Calu3 (cell line): ENCODE measurements at regions of chrX and their contacts with region 1.

Region 1: DNA sequence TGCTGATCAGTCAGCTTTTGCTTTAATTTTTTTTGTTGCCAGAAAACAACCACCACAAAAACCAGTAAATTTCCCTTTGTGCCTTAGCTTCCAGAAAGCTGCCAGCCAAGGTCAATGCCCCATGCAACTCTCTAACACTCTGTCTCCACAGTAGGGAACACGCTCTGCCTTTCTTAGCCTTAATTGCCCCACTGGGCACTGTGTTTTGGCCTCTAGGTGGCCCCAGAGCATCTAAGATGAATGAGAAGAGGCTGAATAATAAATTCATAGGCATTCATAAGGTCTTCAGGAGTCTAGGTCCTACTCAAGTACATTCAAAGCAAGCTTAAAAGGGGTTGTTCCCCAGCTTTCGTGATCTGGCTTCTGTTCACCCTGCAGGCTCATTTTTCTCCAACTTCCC is 57.7 kb upstream of the PASD1 start:
- DNase-seq: peak; percentile 14
- H3K4me3 Mint-ChIP-seq: no peak overlapping the region
- H3K27ac Mint-ChIP-seq: no peak overlapping the region
- H3K4me1 Mint-ChIP-seq: no peaks in the 10 kb centered on the region
- H3K27me3 Mint-ChIP-seq: peaks cover 38% of the 10 kb centered on the region
- CTCF ChIP-seq: no peak

Region 2: GRCh38 chrX:151680805-151681204 is 175.0 kb after region 1 on chrX:
- CTCF ChIA-PET with region 1: no interaction called
- intact Hi-C with region 1: loop called (anchors 1 kb)
- DNase-seq: peak; percentile 70
- H3K4me3 Mint-ChIP-seq: no peak overlapping the region
- H3K27ac Mint-ChIP-seq: no peak overlapping the region
- H3K4me1 Mint-ChIP-seq: no peaks in the 10 kb centered on the region
- H3K27me3 Mint-ChIP-seq: peaks cover 72% of the 10 kb centered on the region
- CTCF ChIP-seq: peak; percentile 44